Activated CD4-positive, alpha-beta T cell treated with anti-CD3 and anti-CD28 coated beads, Interleukin-2, amount 10 ng/mL, durations not matched to agents 24 days and 14 days (primary cell): ENCODE measurements at regions of chr16 and their contacts with region 1.

Region 1: GRCh38 chr16:11218604-11218962 is 37.4 kb downstream of the SOCS1 start:
- DNase-seq: no peak
- H3K4me3 Mint-ChIP-seq: no peak overlapping the region
- H3K27ac Mint-ChIP-seq: peak overlapping the region; percentile 57
- H3K4me1 Mint-ChIP-seq: peaks cover 28% of the 10 kb centered on the region
- H3K27me3 Mint-ChIP-seq: no peaks in the 10 kb centered on the region

Region 2: GRCh38 chr16:11198817-11199216 is 19.8 kb before region 1 on chr16:
- intact Hi-C with region 1: loop called (anchors 2 kb)
- DNase-seq: peak; percentile 71
- H3K4me3 Mint-ChIP-seq: peak overlapping the region; percentile 21
- H3K27ac Mint-ChIP-seq: peak overlapping the region; percentile 69
- H3K4me1 Mint-ChIP-seq: peaks cover 49% of the 10 kb centered on the region
- H3K27me3 Mint-ChIP-seq: no peaks in the 10 kb centered on the region